ENCODE measurements at regions of chr10 and their contacts with region 1.

Region 1: GRCh38 chr10:112183329-112184051 is at the start of gene GPAM:
- DNase-seq: peak; percentile 95
- H3K4me3 Mint-ChIP-seq: peak within 1 kb of the TSS; percentile 97
- H3K27ac Mint-ChIP-seq: peak within 1 kb of the TSS; percentile 93
- H3K4me1 Mint-ChIP-seq: peaks cover 10% of the 10 kb centered on the region
- H3K27me3 Mint-ChIP-seq: no peaks in the 10 kb centered on the region
- CTCF ChIP-seq: no peak
- total RNA-seq, gene GPAM: 6.5 and 7.5 TPM in 2 replicates

Region 2: DNA sequence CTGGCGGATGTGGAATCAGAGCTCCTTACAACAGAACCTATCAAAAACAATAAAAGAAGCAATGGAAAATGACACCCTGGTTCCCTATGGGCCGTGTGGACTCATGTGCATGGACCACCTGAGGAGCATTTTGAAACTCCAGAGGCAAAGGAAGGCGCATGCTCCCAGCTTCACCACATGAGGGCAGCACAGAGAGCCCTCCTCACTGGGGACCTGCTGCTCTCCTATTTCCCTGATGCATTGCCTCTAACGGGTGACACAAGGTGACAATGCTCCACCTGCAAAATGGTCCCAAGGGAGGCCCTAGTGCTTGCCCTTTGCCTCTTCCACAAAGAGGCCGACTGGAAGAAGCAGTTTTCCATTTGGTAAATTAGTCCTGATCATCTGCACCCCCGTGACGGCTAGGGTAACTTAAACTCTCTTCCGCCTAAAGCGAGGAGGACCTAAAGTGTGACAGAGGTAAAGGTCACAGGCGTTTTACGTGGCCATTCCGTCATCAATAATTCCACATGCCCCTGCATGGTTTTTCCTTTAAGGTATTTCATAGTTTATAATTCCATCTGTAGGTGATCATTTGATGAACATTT is 67.6 kb before region 1 on chr10:
- CTCF ChIA-PET with region 1: no interaction called
- intact Hi-C with region 1: no loop called
- DNase-seq: peak; percentile 54
- H3K4me3 Mint-ChIP-seq: no peak overlapping the region
- H3K27ac Mint-ChIP-seq: no peak overlapping the region
- H3K4me1 Mint-ChIP-seq: no peaks in the 10 kb centered on the region
- H3K27me3 Mint-ChIP-seq: peaks cover 60% of the 10 kb centered on the region
- CTCF ChIP-seq: peak; percentile 68

Region 3: GRCh38 chr10:112307358-112308124 is 124.1 kb after region 1 on chr10:
- CTCF ChIA-PET with region 1: no interaction called
- intact Hi-C with region 1: loop called (anchors 5 kb)
- DNase-seq: peak; percentile 52
- H3K4me3 Mint-ChIP-seq: no peak overlapping the region
- H3K27ac Mint-ChIP-seq: no peak overlapping the region
- H3K4me1 Mint-ChIP-seq: no peaks in the 10 kb centered on the region
- H3K27me3 Mint-ChIP-seq: peaks cover 18% of the 10 kb centered on the region
- CTCF ChIP-seq: peak; percentile 63

Region 4: DNA sequence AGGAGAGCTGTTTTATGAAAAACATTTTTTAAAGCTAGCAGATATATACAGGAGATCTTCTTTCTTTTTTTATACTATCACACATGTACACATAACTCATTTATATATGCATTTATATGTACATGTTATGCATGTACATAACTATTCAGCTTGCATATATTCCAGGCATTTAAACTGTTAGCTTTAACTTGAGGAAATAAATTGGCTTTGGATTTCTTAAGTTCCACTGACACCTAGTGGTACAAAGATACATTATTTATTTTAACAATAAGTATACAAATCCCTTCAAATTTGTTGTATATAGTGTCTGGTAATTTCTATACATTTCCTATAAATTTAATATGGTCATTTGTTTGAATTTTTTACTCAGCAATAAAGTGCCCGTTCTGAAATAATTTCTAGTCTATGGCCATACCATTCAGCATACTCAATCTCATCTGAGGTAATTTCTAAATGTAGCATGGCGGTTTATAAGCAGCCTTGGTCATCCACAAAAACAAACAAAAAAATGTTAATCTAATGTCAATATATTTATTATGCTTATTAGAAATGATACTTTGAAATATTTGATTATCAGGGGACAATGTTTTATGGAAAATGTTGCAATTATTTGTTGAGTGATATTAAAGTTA is 251.6 kb after region 1 on chr10:
- CTCF ChIA-PET with region 1: no interaction called
- intact Hi-C with region 1: loop called (anchors 5 kb)
- DNase-seq: no peak
- H3K4me3 Mint-ChIP-seq: no peak overlapping the region
- H3K27ac Mint-ChIP-seq: no peak overlapping the region
- H3K4me1 Mint-ChIP-seq: no peaks in the 10 kb centered on the region
- H3K27me3 Mint-ChIP-seq: no peaks in the 10 kb centered on the region
- CTCF ChIP-seq: peak; percentile 35